PC-9 (cell line): ENCODE measurements at regions of chr22 and their contacts with region 1.

Region 1: GRCh38 chr22:40560551-40560950 is 76.0 kb downstream of the MRTFA start:
- DNase-seq: no peak
- H3K4me3 ChIP-seq: no peak overlapping the region
- H3K27ac ChIP-seq: no peak overlapping the region
- H3K4me1 ChIP-seq: no peaks in the 10 kb centered on the region
- H3K27me3 ChIP-seq: no peaks in the 10 kb centered on the region
- CTCF ChIP-seq: no peak

Region 2: DNA sequence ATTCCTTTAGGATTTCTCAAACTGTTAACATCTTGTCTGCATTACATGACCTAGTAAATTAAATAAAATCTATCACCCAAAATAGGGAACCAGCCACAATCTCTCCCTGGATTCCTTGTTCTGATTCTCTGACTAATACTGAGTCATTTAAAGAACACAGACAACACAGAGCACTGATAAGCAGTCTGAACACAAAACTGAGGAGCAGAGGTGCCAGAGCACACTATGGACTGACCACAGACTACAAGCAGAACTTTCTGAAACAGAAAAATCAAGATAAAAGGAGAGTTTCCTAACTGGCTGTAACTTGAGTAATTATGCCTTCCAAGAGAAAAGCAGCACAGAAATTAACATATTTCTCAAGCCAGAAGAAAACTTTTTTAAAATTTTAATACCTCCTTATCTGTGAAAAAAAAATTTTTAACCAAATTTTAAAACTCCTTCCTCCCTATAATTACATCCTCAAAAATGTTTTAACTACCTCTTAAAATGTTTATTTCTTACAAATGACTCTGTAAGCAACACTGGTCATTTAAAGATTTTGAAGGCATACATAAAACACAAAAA is 61.3 kb before region 1 on chr22:
- CTCF ChIA-PET with region 1: no interaction called
- POLR2A ChIA-PET with region 1: interaction called, 10 read pairs
- intact Hi-C with region 1: no loop called
- DNase-seq: peak; percentile 49 to 98
- H3K4me3 ChIP-seq: peak overlapping the region; percentile 31; the same call in 1 of the 2 replicates
- H3K27ac ChIP-seq: peak overlapping the region; percentile 96
- H3K4me1 ChIP-seq: peaks cover 40% of the 10 kb centered on the region
- H3K27me3 ChIP-seq: no peaks in the 10 kb centered on the region
- CTCF ChIP-seq: no peak